ENCODE measurements at regions of chr6 and their contacts with region 1.

Region 1: DNA sequence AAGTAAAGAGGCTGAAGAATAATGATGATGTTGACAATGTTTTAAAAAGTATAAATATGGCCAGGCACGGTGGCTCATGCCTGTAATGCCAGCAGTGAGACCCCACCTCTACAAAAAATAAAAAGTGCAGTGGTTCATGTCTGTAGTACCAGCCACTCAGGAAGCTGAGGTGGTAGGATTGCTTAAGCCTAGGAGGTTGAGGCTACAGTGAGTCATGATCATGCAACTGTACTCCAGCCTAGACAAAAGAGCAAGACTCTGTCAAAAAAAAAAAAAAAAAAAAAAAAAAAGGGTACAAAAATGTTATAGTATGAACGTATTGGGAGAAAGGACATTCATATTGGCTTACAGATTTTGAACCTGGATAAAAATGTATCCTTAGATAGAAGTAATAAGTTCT is 543.1 kb upstream of the IRAK1BP1 start:
- DNase-seq: no peak

Region 2: DNA sequence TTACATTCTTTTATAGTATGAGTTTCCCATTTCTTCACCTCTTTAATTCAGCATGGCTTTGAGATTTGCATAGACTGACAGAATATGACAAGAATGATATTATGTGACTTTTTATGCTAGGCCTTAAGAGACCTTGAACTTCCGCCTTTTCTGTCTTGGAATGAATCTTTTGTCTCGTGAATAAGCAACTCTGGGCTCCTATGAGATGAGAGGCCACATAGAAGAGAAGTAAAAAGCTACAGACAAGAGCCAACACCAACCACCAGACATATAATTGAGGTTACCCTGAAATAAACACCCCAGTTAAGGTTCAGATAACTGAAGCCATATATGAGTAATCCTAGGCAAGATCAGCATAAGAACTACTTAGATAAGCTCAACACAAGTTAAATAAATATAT is 70.6 kb before region 1 on chr6:
- intact Hi-C with region 1: loop called (anchors 2 kb)
- DNase-seq: no peak

Region 3: DNA sequence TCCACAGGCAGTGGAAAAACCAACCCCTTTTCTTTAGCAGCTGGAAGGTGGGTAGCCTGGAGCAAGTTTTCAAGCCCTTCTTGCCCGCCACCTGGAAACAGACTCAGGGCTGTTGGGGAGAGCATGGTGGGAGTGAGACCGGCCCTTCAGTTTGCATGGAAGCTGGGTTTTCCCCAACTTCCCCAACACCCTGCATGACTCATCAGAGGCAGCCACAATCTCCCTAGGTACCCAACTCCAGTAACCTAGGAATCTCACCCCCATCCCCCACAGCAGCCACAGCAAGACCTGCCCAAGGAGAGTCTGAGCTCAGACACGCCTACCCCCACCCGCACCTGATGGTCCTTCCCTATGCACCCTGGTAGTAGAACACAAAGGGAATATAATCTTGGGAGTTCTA is 456.8 kb after region 1 on chr6:
- intact Hi-C with region 1: no loop called
- DNase-seq: no peak